ENCODE measurements at regions of chr15 and their contacts with region 1.

Region 1: DNA sequence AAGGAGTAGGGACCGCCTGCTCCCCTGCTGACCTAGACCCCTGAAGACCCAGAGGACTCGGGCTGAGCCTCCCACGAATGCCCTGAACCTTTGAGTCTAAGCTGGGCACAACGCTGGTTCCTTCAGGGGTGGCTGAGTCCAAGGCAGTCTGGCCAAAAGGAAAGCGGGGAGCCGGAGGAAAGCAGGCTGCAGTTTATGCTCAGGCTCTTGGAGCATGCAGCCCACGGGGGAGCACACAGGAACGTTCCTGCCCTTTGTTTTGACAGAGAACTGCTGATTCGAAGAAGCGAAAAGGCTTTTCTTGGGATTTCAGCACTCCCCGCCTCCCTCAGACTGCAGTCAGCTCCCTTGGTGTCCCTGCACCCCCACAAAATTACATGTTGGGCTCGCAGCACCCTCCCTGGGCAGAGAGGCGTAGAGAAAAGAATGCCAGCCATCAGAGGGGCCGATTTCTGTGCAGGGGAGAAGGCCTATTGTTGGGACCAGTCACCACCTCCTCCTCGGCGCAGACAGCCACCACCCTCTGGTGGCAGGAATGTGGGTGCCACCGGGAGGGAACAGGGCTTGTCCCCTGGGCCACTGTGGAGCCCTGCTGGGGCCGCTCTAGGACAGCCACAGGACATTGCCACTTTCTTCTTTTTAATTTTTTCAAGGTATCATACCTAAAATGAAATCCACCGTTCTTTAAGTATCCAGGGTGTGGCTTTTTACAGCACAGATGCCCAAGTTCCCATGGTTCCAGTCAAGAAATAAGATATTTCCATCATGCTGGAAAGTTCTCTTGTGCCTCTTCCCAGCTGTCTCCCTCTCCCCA is 72.2 kb downstream of the SMAD6 start:
- DNase-seq: peak; percentile 78
- ATAC-seq: peak; percentile 83
- H3K4me3 ChIP-seq: peak overlapping the region in 1 of 3 experiments; percentile 29; a peak in 1 of 6 replicates
- H3K27ac ChIP-seq: peak overlapping the region; percentile 73
- H3K4me1 ChIP-seq: peaks cover 66% of the 10 kb centered on the region
- H3K27me3 ChIP-seq: no peaks in the 10 kb centered on the region
- CTCF ChIP-seq: peak; percentile 98
- EP300 ChIP-seq: peak in 1 of 2 experiments; percentile 24; a peak in 1 of 4 replicates
- POLR2A ChIP-seq: no peak
- RAD21 ChIP-seq: peak; percentile 97

Region 2: GRCh38 chr15:66611257-66612053 is 162.8 kb before region 1 on chr15:
- CTCF ChIA-PET with region 1: no interaction called
- POLR2A ChIA-PET with region 1: no interaction called
- in situ Hi-C with region 1: loop called (anchors 5 kb)
- intact Hi-C with region 1: loop called (anchors 5 kb)
- DNase-seq: peak; percentile 81
- ATAC-seq: peak; percentile 98
- H3K4me3 ChIP-seq: peak overlapping the region in 1 of 3 experiments; percentile 18; a peak in 1 of 6 replicates
- H3K27ac ChIP-seq: no peak overlapping the region
- H3K4me1 ChIP-seq: peaks cover 13% of the 10 kb centered on the region
- H3K27me3 ChIP-seq: peaks cover 0 to 2% of the 10 kb centered on the region in 2 experiments; a peak in 2 of 5 replicates
- CTCF ChIP-seq: no peak
- EP300 ChIP-seq: no peak
- POLR2A ChIP-seq: no peak
- RAD21 ChIP-seq: no peak

Region 3: DNA sequence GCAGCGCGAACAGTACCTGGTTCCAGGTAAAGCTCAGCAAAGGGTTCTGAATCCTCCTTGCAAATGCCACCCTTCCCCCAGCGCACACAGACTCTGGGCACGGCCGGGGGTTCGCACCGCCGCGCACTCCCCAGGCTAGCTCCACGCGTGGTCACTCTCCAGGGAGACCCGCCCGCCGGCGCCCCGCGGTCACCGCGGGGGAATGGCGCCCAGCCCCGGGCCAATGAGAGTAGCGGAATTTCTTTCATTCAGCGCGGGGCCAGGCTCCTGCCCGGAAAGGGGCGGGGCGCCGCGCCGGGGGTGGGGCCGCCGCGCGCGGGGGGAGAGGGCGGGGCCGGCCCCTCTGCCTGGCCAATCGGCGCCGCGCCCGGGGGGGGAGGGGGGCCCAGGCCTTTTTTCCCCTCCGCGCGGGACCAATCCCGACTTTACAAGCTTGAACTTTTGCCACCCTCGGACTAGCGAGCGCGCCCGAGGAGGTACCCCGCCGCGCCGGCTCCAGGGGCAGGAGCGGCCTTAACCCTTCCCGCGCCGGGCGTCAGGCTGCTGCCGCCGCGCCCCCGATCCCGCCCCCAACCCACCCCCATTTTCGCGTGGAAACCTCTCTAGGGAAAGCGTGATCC is 73.3 kb before region 1 on chr15:
- CTCF ChIA-PET with region 1: interaction called, 4 read pairs
- POLR2A ChIA-PET with region 1: interaction called, 96 read pairs
- in situ Hi-C with region 1: loop called (anchors 5 kb)
- intact Hi-C with region 1: loop called (anchors 1 kb)
- DNase-seq: peak; percentile 92
- ATAC-seq: peak; percentile 69
- H3K4me3 ChIP-seq: peak overlapping the region; percentile 72 to 87 (median 87)
- H3K27ac ChIP-seq: peak overlapping the region; percentile 91
- H3K4me1 ChIP-seq: peaks cover 40% of the 10 kb centered on the region
- H3K27me3 ChIP-seq: no peaks in the 10 kb centered on the region; a peak in 1 of 5 replicates
- CTCF ChIP-seq: no peak
- EP300 ChIP-seq: no peak
- POLR2A ChIP-seq: peak; percentile 30 to 52; a peak in 3 of 4 replicates
- RAD21 ChIP-seq: no peak

Region 4: DNA sequence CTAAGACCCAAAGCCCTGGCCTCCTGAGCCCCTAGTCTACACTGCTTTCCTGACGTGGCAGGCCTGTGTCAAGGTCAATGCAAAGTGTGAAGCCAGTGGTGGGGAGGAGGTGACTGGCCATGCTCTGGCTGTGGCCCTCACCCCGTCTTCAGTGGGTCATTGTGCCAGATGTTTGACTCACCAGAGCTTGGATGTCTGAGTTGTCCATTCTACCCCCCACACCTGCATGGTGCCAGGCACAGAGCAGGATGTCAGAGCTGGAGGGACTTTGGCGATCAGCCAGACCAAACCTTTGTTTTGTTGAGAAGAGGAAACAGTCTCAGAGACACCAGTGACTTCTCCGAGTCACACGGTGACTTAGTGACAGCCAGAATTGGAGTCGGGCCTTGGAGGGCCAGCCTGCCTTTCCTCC is 22.7 kb before region 1 on chr15:
- CTCF ChIA-PET with region 1: no interaction called
- POLR2A ChIA-PET with region 1: interaction called, 23 read pairs
- in situ Hi-C with region 1: no loop called
- intact Hi-C with region 1: no loop called
- DNase-seq: peak; percentile 60
- ATAC-seq: peak; percentile 37; the same call in 2 of the 3 replicates
- H3K4me3 ChIP-seq: no peak overlapping the region
- H3K27ac ChIP-seq: no peak overlapping the region
- H3K4me1 ChIP-seq: peaks cover 57% of the 10 kb centered on the region
- H3K27me3 ChIP-seq: no peaks in the 10 kb centered on the region
- CTCF ChIP-seq: no peak
- EP300 ChIP-seq: no peak
- POLR2A ChIP-seq: no peak
- RAD21 ChIP-seq: no peak

Region 5: DNA sequence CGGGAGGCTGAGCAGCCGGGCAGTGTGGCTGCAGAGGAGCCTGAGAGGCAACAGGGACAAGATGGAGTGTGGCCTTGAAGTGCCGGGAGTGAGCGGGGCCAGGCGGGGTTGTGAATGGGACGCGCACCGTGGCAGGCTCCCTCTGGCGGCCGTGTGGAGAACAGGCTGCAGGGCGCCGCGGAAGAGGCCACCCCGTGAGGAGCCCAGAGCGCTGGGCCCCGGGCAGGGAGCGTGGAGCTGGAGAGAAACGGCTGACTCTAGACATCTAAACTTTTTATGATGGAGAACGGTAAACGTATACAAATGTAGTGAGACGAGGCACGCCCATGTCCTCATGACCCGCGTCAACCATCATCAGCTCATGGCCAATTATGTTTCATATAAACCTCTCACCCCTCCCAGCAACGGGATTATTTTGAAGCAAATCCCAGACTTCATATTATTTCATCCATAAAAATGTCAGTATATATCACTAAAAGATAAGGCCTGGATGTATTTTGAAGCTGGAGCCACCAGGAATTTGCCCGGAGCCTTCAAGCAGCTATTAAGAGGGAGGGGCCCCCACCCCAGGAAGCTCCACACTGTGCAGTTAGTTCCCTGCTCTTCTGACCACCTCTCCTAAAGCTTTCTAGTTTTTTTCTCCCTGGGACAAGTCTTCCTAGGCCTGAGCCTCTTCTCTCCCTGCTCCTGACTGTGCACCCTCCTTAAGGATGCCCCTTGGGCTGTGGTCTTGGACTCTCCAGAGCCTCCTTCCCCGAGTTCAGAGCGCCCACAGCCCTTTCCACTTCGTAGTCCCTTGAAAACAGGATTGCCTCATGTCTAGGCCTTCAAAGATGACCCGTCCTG is 77.2 kb after region 1 on chr15:
- CTCF ChIA-PET with region 1: interaction called, 19 read pairs
- POLR2A ChIA-PET with region 1: interaction called, 7 read pairs
- in situ Hi-C with region 1: no loop called
- intact Hi-C with region 1: loop called (anchors 5 kb)
- DNase-seq: peak; percentile 32
- ATAC-seq: peak; percentile 87
- H3K4me3 ChIP-seq: peak overlapping the region in 1 of 3 experiments; percentile 48; a peak in 3 of 6 replicates
- H3K27ac ChIP-seq: no peak overlapping the region
- H3K4me1 ChIP-seq: peaks cover 36% of the 10 kb centered on the region
- H3K27me3 ChIP-seq: peaks cover 4 to 16% of the 10 kb centered on the region in 2 experiments; a peak in 4 of 5 replicates
- CTCF ChIP-seq: peak; percentile 95
- EP300 ChIP-seq: no peak
- POLR2A ChIP-seq: no peak
- RAD21 ChIP-seq: peak; percentile 83

Measured in HepG2 (cell line).